RWPE1 (cell line): ENCODE measurements at regions of chr17 and their contacts with region 1.

Region 1: DNA sequence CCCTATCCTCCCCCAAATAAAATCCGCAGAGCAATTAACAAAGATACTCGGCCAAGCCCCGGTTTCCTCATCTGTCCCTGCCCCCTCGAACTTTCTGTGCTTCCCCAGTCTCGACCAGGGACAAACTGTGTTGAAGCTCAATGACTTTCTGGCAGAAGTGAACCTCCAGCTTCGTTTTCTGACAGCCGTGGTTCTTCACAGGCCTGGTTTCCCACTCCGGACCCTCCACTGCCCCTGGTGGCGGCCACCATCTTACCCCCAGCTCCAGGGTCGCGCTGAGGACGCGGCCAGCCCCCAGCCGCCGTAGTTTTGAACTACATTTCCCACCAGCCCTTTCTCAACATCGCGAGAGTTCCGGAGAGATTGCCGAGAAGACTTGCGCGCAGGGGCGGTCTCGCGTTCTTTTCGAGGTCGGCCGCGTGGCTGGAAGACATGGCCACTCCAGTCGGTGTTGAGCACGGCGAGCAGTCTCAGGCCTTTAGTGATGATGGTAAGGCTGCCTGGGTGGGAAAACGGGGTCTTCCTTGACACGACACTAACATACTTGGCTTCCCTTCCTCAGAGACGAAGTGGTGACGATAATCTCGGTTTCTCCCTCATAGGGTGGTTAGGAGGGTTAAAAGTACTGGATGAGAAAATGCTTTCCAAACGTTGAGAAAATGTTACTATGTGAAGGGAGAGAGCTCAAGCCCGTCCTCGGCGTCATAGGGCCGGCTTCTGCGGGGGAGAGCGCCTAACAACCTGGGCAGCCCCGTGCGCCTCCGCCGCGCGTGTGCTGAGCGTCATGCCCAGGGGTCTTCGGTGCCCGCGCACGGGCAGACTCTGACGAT is 17.7 kb downstream of the PRCD start:
- DNase-seq: peak; percentile 83
- H3K27ac ChIP-seq: peak overlapping the region; percentile 94
- CTCF ChIP-seq: peak; percentile 55

Region 2: DNA sequence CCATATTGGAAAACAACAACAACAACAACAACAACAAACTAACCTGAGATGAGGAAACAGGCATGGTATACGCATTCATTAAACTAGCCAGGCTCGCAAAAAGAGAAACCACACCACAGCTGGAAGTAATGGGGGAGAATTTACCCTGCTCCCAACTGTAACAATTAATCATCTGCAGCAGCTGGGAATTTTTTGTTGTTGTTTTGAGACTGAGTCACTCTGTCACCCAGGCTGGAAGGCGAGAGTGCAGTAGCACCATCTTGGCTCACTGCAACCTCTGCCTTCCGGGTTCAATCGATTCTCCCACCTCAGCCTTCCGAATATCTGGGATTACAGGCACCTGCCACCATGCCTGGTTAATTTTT is 220.2 kb before region 1 on chr17:
- CTCF ChIA-PET with region 1: no interaction called
- POLR2A ChIA-PET with region 1: no interaction called
- DNase-seq: no peak
- H3K27ac ChIP-seq: no peak overlapping the region
- CTCF ChIP-seq: no peak

Region 3: DNA sequence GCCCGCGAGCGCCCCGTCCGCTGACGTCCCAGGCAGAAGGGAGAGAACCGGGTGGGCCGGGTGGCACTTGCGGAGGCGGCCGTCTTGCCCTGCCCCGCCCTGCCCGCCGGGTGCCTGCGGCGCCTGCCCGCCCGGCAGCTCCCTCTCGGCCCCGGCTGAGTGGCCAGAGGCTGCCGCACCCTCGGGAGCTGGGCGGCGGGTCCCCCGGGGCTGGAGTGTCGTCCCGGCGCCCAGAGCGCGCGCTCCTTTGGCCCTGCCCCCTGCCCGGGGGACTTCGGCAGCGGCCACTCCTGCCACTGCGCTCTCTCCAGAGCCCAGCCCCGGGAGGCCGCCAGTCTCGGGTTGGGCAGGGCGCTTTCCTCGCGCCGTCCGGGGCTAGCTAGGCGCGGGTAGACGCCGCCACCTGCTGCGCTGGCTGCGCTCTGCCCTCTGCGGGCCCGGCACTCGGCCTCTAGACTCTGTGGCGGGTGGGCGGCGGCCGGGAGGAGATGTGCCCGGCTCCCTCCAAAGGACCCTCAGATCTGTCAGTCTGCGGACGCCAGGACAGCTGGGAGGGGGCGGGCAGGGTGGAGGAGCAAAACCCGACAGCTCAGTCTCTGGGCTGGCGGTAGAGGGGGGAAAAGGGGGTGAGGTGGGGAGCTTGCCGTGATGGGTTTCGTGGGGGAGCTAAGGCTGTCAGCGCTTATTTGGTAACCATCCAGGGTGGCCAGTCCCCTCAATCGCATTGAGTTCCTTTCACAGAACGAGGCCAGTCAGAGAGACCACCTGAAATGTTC is 28.4 kb after region 1 on chr17 and contains the start of gene ST6GALNAC2:
- CTCF ChIA-PET with region 1: interaction called, 12 read pairs
- POLR2A ChIA-PET with region 1: no interaction called
- DNase-seq: peak; percentile 55
- H3K27ac ChIP-seq: peak within 1 kb of the TSS; percentile 96
- CTCF ChIP-seq: peak; percentile 79